ENCODE measurements at regions of chr1 and their contacts with region 1.

Region 1: GRCh38 chr1:20212685-20213331 is 26.5 kb upstream of the PLA2G2C start:
- DNase-seq: peak; percentile 76

Region 2: GRCh38 chr1:20250341-20250989 is 37.7 kb after region 1 on chr1:
- CTCF ChIA-PET with region 1: no interaction called
- POLR2A ChIA-PET with region 1: no interaction called
- DNase-seq: no peak

Region 3: DNA sequence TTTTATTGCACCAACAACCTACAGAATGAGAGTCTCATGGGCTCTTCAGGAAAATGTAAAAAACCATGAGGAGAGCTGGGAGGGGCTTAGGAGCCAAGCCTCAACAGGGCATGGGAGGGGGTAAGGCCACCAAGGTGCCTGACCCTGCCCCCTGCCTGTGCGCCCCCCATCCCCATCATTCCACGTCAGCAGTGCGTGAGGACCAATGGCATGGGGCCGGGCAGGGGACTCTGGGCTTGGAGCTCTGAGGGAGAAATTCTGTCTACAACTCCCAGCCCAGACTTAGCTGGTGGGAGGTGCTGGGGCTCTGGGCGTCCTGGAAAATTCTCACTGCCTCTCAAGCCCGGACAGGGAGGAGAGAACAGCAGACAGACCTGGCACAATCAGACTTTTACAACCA is 278.4 kb after region 1 on chr1:
- CTCF ChIA-PET with region 1: interaction called, 12 read pairs
- POLR2A ChIA-PET with region 1: no interaction called
- DNase-seq: no peak

Measured in HEK293T (cell line).